GM12878 (cell line): ENCODE measurements at regions of chr13 and their contacts with region 1.

Region 1: GRCh38 chr13:100674848-100675660 is 459 bp upstream of the TMTC4 start:
- DNase-seq: peak; percentile 82
- ATAC-seq: peak; percentile 93
- H3K4me3 ChIP-seq: peak overlapping the region; percentile 81
- H3K27ac ChIP-seq: peak overlapping the region; percentile 74
- H3K4me1 ChIP-seq: peaks cover 5% of the 10 kb centered on the region
- H3K27me3 ChIP-seq: no peaks in the 10 kb centered on the region
- CTCF ChIP-seq: peak; percentile 10 to 48 (median 40); a peak in 3 of 6 replicates
- EP300 ChIP-seq: no peak
- POLR2A ChIP-seq: peak; percentile 75
- RAD21 ChIP-seq: no peak

Region 2: GRCh38 chr13:100588331-100589177 is 86.5 kb before region 1 on chr13 and contains the start of gene GGACT:
- CTCF ChIA-PET with region 1: no interaction called
- POLR2A ChIA-PET with region 1: no interaction called
- RAD21 ChIA-PET with region 1: no interaction called
- SMC1A ChIA-PET with region 1: no interaction called
- in situ Hi-C with region 1: no loop called
- intact Hi-C with region 1: loop called (anchors 1 kb)
- DNase-seq: peak; percentile 13
- ATAC-seq: peak; percentile 99
- H3K4me3 ChIP-seq: peak within 1 kb of the TSS; percentile 74; the same call in 1 of the 2 replicates
- H3K27ac ChIP-seq: peak within 1 kb of the TSS; percentile 30; the same call in 1 of the 2 replicates
- H3K4me1 ChIP-seq: peaks cover 6% of the 10 kb centered on the region; the same call in 1 of the 2 replicates
- H3K27me3 ChIP-seq: no peaks in the 10 kb centered on the region
- CTCF ChIP-seq: peak; percentile 69 to 76 (median 71); a peak in 5 of 6 replicates
- EP300 ChIP-seq: no peak
- POLR2A ChIP-seq: peak; percentile 81
- RAD21 ChIP-seq: 0 out of 2 replicates have a peak, but pooled peaks have one; percentile 13
- polyA plus RNA-seq, gene GGACT: 0.61 to 0.93 TPM